HEK293T (cell line): ENCODE measurements at regions of chr5 and their contacts with region 1.

Region 1: GRCh38 chr5:137075163-137075970 is 423.8 kb downstream of the SPOCK1 start:
- DNase-seq: peak; percentile 80

Region 2: GRCh38 chr5:136957428-136957827 is 117.9 kb before region 1 on chr5:
- CTCF ChIA-PET with region 1: no interaction called
- POLR2A ChIA-PET with region 1: no interaction called
- DNase-seq: no peak

Region 3: DNA sequence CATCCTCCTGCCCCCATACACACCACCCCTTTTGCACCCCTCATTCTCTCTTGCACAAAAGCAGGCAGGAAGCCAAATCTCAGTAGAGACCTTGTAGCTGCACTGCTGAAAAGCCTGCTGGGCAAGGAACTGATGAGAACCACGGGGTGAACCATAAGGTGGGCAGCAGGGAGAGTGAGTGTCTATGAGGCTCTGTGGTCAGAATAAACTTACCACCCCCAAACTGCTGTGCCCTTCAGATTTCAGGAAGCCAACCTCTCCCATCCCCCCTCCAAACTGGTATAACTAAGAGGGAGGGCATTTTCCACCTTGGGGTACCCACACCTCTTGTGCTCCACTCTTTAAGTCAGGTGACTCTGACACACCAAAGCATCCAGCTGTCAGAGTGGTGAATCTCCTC is 47.6 kb before region 1 on chr5:
- CTCF ChIA-PET with region 1: no interaction called
- POLR2A ChIA-PET with region 1: no interaction called
- DNase-seq: no peak

Region 4: GRCh38 chr5:137086342-137086741 is 11.0 kb after region 1 on chr5:
- CTCF ChIA-PET with region 1: interaction called, 10 read pairs
- POLR2A ChIA-PET with region 1: no interaction called
- DNase-seq: no peak

Region 5: GRCh38 chr5:137114529-137114928 is 39.2 kb after region 1 on chr5:
- CTCF ChIA-PET with region 1: no interaction called
- POLR2A ChIA-PET with region 1: no interaction called
- DNase-seq: no peak